ENCODE measurements at regions of chr14 and their contacts with region 1.

Region 1: DNA sequence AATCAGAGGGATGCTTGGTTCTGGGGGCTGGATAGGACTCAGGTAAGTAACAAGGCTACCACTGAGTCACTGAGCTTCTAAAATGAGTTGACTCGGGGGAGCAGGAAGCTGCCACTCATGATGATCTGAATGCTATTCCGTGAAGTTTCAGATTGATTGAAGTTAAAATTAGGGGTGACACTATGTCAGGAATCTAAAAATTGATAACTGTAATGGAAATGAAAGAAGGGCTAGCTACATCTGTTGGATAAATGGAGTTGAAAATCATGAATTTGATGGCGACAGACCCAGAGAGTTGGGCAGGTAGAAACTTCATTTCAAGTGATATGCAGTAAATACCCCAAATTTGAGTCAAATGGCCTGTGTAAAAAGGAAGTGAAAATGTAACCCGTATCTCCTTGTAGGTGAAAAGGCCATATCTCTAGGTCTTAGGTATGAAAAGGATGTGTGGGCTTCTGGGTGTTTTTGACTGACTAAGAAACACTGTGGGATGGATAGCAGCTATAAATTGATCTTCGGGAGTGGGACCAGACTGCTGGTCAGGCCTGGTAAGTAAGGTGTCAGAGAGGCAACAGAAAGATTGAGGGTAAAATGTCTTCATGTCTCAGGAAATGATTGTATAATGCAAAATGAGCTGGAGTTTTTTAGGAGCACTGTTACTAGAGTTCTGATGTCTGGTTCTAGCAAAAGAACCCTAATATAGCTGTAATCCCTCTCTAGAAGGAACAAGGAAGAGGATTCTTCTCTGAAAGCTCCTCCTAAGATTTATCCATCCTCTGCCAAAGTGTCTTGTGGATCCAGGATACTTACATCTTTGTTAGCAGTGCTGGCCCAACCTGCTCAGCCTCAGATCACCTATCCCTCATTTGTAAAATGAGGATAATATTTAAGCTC is 57.3 kb downstream of the DAD1 start:
- DNase-seq: peak; percentile 79
- ATAC-seq: peak; percentile 79
- H3K4me3 ChIP-seq: peak overlapping the region; percentile 23 to 51 (median 32)
- H3K4me3 Mint-ChIP-seq: peak overlapping the region; percentile 79
- H3K27ac ChIP-seq: peak overlapping the region; percentile 89 to 90
- H3K27ac Mint-ChIP-seq: peak overlapping the region; percentile 93
- H3K4me1 ChIP-seq: peaks cover 49 to 63% of the 10 kb centered on the region in 2 donors
- H3K4me1 Mint-ChIP-seq: peaks cover 86% of the 10 kb centered on the region
- H3K27me3 ChIP-seq: no peaks in the 10 kb centered on the region
- H3K27me3 Mint-ChIP-seq: no peaks in the 10 kb centered on the region
- CTCF ChIP-seq: no peak

Region 2: GRCh38 chr14:22472935-22473854 is 58.5 kb before region 1 on chr14:
- CTCF ChIA-PET with region 1: interaction called, 16 read pairs
- POLR2A ChIA-PET with region 1: interaction called, 3 read pairs
- intact Hi-C with region 1: no loop called
- DNase-seq: peak; percentile 82
- ATAC-seq: peak; percentile 56
- H3K4me3 ChIP-seq: no peak overlapping the region
- H3K4me3 Mint-ChIP-seq: no peak overlapping the region
- H3K27ac ChIP-seq: no peak overlapping the region
- H3K27ac Mint-ChIP-seq: peak overlapping the region; percentile 75
- H3K4me1 ChIP-seq: peaks cover 60 to 74% of the 10 kb centered on the region in 2 donors
- H3K4me1 Mint-ChIP-seq: peaks cover 89% of the 10 kb centered on the region
- H3K27me3 ChIP-seq: no peaks in the 10 kb centered on the region
- H3K27me3 Mint-ChIP-seq: no peaks in the 10 kb centered on the region
- CTCF ChIP-seq: peak; percentile 77

Region 3: DNA sequence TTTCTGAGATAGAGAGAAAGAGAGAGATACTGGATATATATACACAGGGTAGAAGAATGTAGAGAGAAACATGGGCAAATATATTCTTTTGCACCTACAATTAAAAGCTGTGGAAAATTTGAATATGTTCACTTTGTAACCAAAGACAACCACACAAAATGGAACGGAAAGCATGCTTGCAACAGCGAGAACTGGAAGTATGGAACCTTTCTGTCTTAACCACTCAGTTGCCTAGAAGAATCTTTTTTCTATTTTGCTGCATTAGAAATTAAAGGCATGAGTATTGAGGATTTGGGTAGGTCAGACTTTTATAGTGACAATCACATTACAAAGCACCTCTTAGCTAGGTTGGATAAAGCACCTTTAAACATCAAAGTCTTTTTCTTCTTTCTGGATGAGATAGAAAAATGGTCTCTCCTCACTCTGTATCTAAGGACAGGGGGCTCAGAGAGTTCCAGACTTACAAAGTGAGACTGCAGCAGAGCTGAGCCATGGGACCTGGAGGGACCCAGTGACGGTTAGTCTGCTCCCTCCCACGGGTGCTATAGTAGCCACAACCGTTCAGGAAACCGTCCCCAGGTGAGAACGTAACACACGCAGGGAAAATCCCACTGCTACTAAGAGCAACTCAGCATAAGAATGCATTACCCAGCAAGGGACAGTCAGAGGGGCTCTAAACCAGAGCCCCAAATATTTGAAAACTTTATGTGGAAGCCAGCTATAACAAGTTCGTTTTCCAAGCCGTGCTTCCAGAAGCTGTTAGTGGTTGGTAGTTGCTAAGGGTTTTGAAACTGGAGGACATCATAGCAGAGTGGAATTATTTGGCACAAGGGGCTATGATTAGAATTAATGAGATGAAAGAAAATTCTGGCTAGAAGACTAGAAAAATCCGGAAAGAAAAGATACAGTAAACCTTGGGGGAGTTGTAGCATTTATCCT is 39.7 kb before region 1 on chr14:
- CTCF ChIA-PET with region 1: interaction called, 5 read pairs
- POLR2A ChIA-PET with region 1: interaction called, 4 read pairs
- intact Hi-C with region 1: loop called (anchors 5 kb)
- DNase-seq: peak; percentile 52
- ATAC-seq: peak; percentile 38
- H3K4me3 ChIP-seq: no peak overlapping the region
- H3K4me3 Mint-ChIP-seq: peak overlapping the region; percentile 30
- H3K27ac ChIP-seq: peak overlapping the region; percentile 16 to 26
- H3K27ac Mint-ChIP-seq: peak overlapping the region; percentile 86
- H3K4me1 ChIP-seq: peaks cover 25 to 71% of the 10 kb centered on the region in 2 donors
- H3K4me1 Mint-ChIP-seq: peaks cover 93% of the 10 kb centered on the region
- H3K27me3 ChIP-seq: no peaks in the 10 kb centered on the region
- H3K27me3 Mint-ChIP-seq: no peaks in the 10 kb centered on the region
- CTCF ChIP-seq: no peak

Region 4: DNA sequence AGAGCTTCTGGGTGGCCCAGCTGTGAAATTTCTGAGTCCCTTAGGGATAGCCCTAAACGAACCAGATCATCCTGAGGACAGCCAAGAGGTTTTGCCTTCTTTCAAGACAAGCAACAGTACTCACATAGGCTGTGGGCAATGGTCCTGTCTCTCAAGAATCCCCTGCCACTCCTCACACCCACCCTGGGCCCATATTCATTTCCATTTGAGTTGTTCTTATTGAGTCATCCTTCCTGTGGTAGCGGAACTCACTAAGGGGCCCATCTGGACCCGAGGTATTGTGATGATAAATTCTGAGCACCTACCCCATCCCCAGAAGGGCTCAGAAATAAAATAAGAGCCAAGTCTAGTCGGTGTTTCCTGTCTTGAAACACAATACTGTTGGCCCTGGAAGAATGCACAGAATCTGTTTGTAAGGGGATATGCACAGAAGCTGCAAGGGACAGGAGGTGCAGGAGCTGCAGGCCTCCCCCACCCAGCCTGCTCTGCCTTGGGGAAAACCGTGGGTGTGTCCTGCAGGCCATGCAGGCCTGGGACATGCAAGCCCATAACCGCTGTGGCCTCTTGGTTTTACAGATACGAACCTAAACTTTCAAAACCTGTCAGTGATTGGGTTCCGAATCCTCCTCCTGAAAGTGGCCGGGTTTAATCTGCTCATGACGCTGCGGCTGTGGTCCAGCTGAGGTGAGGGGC is 18.4 kb after region 1 on chr14:
- CTCF ChIA-PET with region 1: interaction called, 72 read pairs
- POLR2A ChIA-PET with region 1: interaction called, 16 read pairs
- intact Hi-C with region 1: no loop called
- DNase-seq: peak; percentile 37
- ATAC-seq: peak; percentile 81
- H3K4me3 ChIP-seq: peak overlapping the region in 1 of 5 experiments; percentile 26
- H3K4me3 Mint-ChIP-seq: peak overlapping the region; percentile 69
- H3K27ac ChIP-seq: peak overlapping the region; percentile 49 to 100
- H3K27ac Mint-ChIP-seq: peak overlapping the region; percentile 93
- H3K4me1 ChIP-seq: peaks cover 39 to 56% of the 10 kb centered on the region in 2 donors
- H3K4me1 Mint-ChIP-seq: peaks cover 81% of the 10 kb centered on the region
- H3K27me3 ChIP-seq: no peaks in the 10 kb centered on the region
- H3K27me3 Mint-ChIP-seq: no peaks in the 10 kb centered on the region
- CTCF ChIP-seq: no peak

Measured in B cell (primary cell).